ENCODE measurements at regions of chr1 and their contacts with region 1.

Region 1: DNA sequence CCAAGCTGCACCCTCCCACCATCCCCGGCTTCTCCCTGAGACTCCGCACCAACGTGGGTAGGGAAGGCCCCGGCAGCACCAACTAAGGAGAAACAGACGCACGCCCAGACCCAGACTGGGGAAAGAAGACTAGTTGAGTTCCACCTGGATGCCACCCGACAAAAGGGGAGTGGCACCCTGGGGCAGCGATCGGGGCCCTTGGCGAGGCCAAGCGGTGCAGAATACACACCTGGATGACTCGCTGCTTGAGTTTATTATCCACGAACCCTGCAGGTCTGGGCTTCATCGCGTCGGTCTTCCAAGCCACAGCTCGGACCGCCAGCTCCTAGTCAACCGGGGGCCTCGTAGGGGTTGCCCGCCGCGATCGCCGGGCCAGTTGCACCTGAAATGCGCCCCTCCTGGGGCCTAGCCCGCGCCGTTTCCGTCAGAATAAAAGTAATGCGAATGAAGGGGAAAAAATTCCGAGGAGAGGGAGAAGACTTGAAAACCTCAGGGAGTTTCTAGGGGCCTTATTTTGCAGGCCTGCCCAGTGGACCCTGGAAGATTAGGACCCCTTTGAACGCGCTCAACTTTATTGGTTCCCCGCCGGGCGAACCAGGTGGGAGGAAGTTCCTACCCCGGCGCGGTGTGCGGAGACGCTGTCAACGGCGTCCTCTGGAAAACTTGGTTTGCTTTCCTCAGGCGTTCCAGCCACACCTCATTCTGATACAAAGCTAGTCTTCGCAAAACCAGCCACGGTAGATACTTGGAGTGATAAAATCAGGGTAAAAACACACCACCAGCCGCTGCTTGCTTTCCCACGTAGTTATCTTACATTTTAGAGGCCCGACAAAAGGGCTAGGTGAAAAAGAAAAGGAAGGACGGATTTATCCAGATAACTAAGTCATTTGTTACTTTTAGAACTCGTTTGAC is at the start of gene NVL:
- DNase-seq: peak; percentile 79
- ATAC-seq: peak; percentile 84
- H3K4me3 Mint-ChIP-seq: peak within 1 kb of the TSS; percentile 91
- H3K27ac Mint-ChIP-seq: peak within 1 kb of the TSS; percentile 99
- H3K4me1 Mint-ChIP-seq: peaks cover 46% of the 10 kb centered on the region
- H3K27me3 Mint-ChIP-seq: no peaks in the 10 kb centered on the region
- CTCF ChIP-seq: no peak
- total RNA-seq, gene NVL: 43.7 and 44.4 TPM in 2 replicates

Region 2: GRCh38 chr1:223712194-223712849 is 617.8 kb before region 1 on chr1 and contains the start of gene CAPN2:
- CTCF ChIA-PET with region 1: no interaction called
- POLR2A ChIA-PET with region 1: no interaction called
- intact Hi-C with region 1: loop called (anchors 5 kb)
- DNase-seq: peak; percentile 67
- ATAC-seq: peak; percentile 74
- H3K4me3 Mint-ChIP-seq: peak within 1 kb of the TSS; percentile 86
- H3K27ac Mint-ChIP-seq: peak within 1 kb of the TSS; percentile 72
- H3K4me1 Mint-ChIP-seq: peaks cover 49% of the 10 kb centered on the region
- H3K27me3 Mint-ChIP-seq: no peaks in the 10 kb centered on the region
- CTCF ChIP-seq: no peak
- total RNA-seq, gene CAPN2: 50.7 and 62.6 TPM in 2 replicates

Region 3: DNA sequence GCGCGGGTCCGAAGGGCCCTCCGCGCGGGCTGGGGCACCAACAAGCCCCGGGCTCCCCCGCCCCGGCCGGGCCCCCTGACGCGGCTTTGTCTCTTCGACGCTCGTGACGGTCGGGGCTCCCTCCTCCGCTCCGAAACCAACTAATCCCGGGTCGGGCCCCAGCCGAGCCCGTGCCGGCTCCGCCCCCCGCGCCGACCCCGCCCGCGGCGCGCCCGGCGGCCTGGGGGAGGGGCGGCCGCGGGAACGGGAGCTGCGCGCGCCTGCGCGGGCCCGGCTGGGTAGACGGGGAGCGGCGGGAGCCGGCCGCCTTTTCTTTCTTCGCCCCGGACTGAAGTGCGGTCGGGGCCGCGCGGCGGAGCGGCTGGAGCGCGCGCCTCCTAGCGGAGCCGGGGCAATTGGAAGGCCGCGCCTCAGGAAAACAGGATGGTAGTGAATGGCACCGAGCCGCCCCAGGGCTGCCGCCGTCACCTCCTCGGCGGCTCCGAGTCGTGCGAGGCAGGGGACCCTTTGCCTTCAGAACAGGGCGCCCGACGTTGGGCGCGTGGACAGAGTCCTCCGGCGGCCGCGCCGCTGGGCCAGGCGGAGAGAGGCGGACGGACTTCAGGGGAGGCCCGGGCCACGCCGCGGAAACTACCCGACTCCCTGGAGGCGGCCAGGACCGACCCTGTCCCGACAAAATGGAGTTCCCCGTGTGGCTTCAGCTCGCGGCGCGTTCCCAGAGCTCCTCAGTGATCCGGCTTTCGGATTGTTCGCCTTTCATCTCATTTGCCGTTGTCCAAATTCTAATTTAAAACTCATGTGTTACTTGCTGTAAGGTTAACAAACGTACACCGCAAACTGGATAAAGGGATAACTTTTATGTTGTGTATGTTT is 484.1 kb before region 1 on chr1 and contains the start of gene TP53BP2:
- CTCF ChIA-PET with region 1: no interaction called
- POLR2A ChIA-PET with region 1: interaction called, 3 read pairs
- intact Hi-C with region 1: loop called (anchors 10 kb)
- DNase-seq: peak; percentile 92
- ATAC-seq: peak; percentile 84
- H3K4me3 Mint-ChIP-seq: peak within 1 kb of the TSS; percentile 89
- H3K27ac Mint-ChIP-seq: peak within 1 kb of the TSS; percentile 96
- H3K4me1 Mint-ChIP-seq: peaks cover 36% of the 10 kb centered on the region
- H3K27me3 Mint-ChIP-seq: no peaks in the 10 kb centered on the region
- CTCF ChIP-seq: no peak
- total RNA-seq, gene TP53BP2: 50.4 and 52.9 TPM in 2 replicates

Region 4: GRCh38 chr1:224168859-224169380 is 161.2 kb before region 1 on chr1:
- CTCF ChIA-PET with region 1: interaction called, 7 read pairs
- POLR2A ChIA-PET with region 1: interaction called, 4 read pairs
- intact Hi-C with region 1: loop called (anchors 1 kb)
- DNase-seq: no peak
- ATAC-seq: peak; percentile 89
- H3K4me3 Mint-ChIP-seq: peak overlapping the region; percentile 5
- H3K27ac Mint-ChIP-seq: peak overlapping the region; percentile 8
- H3K4me1 Mint-ChIP-seq: peaks cover 35% of the 10 kb centered on the region
- H3K27me3 Mint-ChIP-seq: no peaks in the 10 kb centered on the region
- CTCF ChIP-seq: no peak

Region 5: GRCh38 chr1:224287714-224288113 is 42.4 kb before region 1 on chr1:
- CTCF ChIA-PET with region 1: no interaction called
- POLR2A ChIA-PET with region 1: no interaction called
- intact Hi-C with region 1: no loop called
- DNase-seq: no peak
- ATAC-seq: no peak
- H3K4me3 Mint-ChIP-seq: no peak overlapping the region
- H3K27ac Mint-ChIP-seq: no peak overlapping the region
- H3K4me1 Mint-ChIP-seq: no peaks in the 10 kb centered on the region
- H3K27me3 Mint-ChIP-seq: no peaks in the 10 kb centered on the region
- CTCF ChIP-seq: no peak

Region 6: DNA sequence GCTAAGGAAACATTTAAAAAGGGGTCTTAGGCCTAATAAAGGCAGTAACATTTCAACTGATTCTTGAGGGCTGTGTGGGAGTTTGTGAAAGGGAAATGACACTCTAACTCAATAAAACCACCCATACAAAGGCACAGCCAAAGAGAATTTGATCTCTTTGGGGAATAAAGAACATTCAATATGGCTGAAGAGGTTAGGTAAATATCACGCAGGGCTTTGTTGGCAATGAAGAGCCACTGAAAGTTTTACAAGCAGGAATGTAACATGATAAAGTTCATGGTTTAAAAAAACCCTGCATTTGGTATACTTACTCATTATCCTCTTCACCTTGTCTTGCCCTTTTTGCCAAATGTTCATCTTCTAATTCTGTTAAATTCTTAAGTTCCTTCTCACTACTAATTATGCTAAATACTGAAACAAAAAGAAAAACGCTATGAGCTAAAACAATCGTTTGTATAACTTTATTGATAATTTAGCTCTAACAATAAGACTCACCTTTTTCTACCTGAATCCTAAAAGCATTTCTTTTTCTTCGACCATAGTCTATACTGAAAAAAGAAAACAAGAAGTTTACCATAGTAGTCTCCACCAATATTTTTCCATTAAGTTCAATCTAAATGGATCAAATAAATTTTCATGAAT is 12.6 kb before region 1 on chr1:
- CTCF ChIA-PET with region 1: no interaction called
- POLR2A ChIA-PET with region 1: no interaction called
- intact Hi-C with region 1: no loop called
- DNase-seq: no peak
- ATAC-seq: no peak
- H3K4me3 Mint-ChIP-seq: no peak overlapping the region
- H3K27ac Mint-ChIP-seq: no peak overlapping the region
- H3K4me1 Mint-ChIP-seq: peaks cover 3% of the 10 kb centered on the region
- H3K27me3 Mint-ChIP-seq: no peaks in the 10 kb centered on the region
- CTCF ChIP-seq: no peak

Region 7: DNA sequence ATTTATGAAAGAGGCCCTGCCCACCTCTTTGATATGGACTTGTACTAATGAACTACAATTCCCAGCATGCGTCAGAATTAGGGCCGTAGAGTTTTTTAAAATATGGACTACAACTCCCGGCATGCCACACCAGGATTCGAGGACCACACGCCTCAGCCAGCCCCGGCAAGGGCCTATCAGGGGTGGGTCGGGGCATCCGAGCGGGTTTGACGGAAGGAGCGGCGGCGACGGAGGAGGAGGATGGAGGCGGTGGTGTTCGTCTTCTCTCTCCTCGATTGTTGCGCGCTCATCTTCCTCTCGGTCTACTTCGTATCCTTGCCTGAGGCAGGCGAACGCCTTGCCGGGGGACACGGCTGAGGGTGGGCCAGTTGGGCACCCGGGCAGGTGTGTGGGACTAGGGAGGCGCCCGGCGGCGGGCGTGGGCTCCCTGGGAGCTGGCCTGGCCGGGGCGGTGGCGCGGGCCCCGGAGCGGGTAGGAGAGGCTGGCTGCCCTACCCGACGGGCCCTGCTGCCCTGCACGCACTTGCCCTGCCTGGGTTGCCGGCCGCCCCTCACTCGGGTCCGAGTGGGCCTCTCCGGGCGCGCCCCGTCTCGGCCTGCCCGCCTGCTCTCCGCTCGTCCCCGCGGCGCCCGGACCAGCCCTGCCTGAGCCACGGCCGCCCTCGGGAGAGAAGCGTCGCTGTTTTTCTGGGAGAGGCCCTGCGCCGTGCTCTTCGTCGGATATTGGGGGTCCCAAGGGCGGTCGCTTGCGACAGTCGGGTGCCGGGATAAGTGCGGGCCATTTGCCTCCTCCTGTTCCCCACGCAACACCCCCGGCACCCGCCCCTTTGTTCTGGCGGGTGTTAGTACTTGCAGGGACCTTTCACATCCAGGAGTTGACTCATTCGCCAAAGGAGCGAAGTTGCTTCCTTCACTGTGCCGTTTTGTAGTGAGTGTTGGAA is 26.9 kb after region 1 on chr1 and contains the start of gene CNIH4:
- CTCF ChIA-PET with region 1: no interaction called
- POLR2A ChIA-PET with region 1: interaction called, 4 read pairs
- intact Hi-C with region 1: loop called (anchors 1 kb)
- DNase-seq: peak; percentile 76
- ATAC-seq: peak; percentile 99
- H3K4me3 Mint-ChIP-seq: peak within 1 kb of the TSS; percentile 91
- H3K27ac Mint-ChIP-seq: peak within 1 kb of the TSS; percentile 81
- H3K4me1 Mint-ChIP-seq: peaks cover 24% of the 10 kb centered on the region
- H3K27me3 Mint-ChIP-seq: no peaks in the 10 kb centered on the region
- CTCF ChIP-seq: no peak
- total RNA-seq, gene CNIH4: 16.2 and 21.0 TPM in 2 replicates

Region 8: GRCh38 chr1:224407571-224408560 is 77.8 kb after region 1 on chr1:
- CTCF ChIA-PET with region 1: no interaction called
- POLR2A ChIA-PET with region 1: no interaction called
- intact Hi-C with region 1: no loop called
- DNase-seq: no peak
- ATAC-seq: no peak
- H3K4me3 Mint-ChIP-seq: no peak overlapping the region
- H3K27ac Mint-ChIP-seq: no peak overlapping the region
- H3K4me1 Mint-ChIP-seq: no peaks in the 10 kb centered on the region
- H3K27me3 Mint-ChIP-seq: no peaks in the 10 kb centered on the region
- CTCF ChIP-seq: no peak